ENCODE measurements at regions of chr15 and their contacts with region 1.

Region 1: DNA sequence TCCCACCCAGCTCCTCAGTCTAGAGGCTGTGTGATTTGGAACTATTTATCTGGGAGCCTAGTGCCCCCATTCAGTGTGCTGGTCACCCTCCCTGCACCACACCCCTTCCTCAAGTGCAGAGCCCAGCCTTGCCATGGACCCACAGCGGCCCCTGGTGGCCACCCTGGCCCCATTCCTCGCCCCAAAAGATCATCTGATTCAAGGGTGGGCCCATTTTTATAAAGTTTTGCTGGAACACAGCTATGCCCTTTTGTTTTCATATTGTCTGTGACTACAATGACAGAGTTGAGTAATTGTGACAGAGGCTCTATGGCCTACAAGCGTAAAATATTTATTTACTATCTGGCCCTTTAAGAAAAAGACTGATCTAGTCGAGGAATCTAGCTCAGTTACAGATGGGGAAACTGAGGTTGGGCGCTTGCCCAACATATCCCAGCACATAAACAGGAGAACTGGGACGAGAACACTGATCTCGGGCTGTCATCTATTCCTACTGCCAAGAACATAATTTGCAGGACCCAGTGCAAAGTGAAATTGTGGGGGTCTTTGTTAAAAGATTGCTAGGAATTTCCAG is 1.8 kb downstream of the FES start:
- DNase-seq: peak in 1 of 2 experiments; percentile 61
- ATAC-seq: peak; percentile 57 to 82; a peak in 5 of 6 replicates
- H3K4me3 ChIP-seq: no peak overlapping the region
- H3K27ac ChIP-seq: peak overlapping the region in 1 of 2 experiments; percentile 19; a peak in 1 of 6 replicates
- H3K4me1 ChIP-seq: no peaks in the 10 kb centered on the region
- CTCF ChIP-seq: peak; percentile 99
- EP300 ChIP-seq: no peak
- POLR2A ChIP-seq: no peak
- RAD21 ChIP-seq: peak; percentile 100

Region 2: GRCh38 chr15:90497912-90498311 is 388.2 kb before region 1 on chr15:
- CTCF ChIA-PET with region 1: interaction called, 17 read pairs
- POLR2A ChIA-PET with region 1: no interaction called
- DNase-seq: no peak
- ATAC-seq: no peak; a peak in 1 of 6 replicates
- H3K4me3 ChIP-seq: no peak overlapping the region
- H3K27ac ChIP-seq: no peak overlapping the region
- H3K4me1 ChIP-seq: no peaks in the 10 kb centered on the region
- CTCF ChIP-seq: no peak
- EP300 ChIP-seq: no peak
- POLR2A ChIP-seq: no peak
- RAD21 ChIP-seq: no peak

Region 3: DNA sequence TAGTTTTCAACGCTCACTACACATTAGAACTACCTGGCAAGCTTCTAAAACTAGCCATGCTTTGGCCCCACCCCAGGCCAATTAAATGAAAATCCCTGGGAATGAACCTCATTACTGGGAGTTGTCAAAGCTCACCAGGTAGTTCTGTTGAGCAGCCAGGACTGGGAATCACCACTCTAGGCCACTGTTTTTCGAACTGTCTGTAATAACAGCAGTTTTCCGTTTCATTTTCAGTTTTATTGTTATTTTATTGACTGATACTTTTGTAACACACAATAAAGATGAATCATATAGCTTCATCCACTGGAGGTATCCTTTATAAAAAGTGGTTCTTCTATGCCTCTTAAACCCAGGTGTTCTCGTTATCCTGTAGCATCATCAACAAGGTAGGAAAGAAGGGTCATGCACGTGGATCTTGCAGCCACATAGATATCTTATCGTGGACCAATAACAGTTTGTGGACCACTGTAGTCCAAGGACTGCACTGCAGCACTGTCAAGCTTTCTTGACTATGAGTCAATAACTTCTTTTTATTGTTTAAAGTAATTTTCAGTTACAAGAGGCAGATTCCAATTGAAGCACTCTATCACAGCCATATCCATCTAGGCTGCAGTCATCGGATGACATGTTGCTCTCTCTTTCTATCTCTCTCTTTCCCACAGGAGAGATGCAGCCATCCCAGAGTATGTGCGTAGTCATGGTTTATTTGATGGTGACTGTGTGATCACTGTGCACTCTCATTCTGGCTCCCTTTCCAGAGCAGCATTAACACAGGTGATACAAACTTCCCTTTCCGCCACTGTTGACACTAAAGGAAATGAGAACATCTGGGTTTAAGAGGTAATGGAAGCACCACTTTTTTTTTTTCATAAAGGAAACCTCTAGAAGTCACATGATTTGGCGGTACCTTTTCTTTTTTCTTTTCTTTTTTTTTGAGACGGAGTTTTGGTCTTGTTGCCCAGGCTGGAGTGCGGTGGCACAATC is 208.0 kb before region 1 on chr15:
- CTCF ChIA-PET with region 1: interaction called, 10 read pairs
- POLR2A ChIA-PET with region 1: no interaction called
- DNase-seq: no peak
- ATAC-seq: no peak
- H3K4me3 ChIP-seq: no peak overlapping the region
- H3K27ac ChIP-seq: no peak overlapping the region
- H3K4me1 ChIP-seq: peaks cover 9% of the 10 kb centered on the region; the same call in 2 of the 3 replicates
- CTCF ChIP-seq: no peak
- EP300 ChIP-seq: no peak
- POLR2A ChIP-seq: no peak
- RAD21 ChIP-seq: no peak

Region 4: GRCh38 chr15:90751300-90751825 is 134.8 kb before region 1 on chr15:
- CTCF ChIA-PET with region 1: interaction called, 13 read pairs
- POLR2A ChIA-PET with region 1: no interaction called
- DNase-seq: no peak
- ATAC-seq: no peak
- H3K4me3 ChIP-seq: no peak overlapping the region
- H3K27ac ChIP-seq: no peak overlapping the region
- H3K4me1 ChIP-seq: no peaks in the 10 kb centered on the region
- CTCF ChIP-seq: no peak
- EP300 ChIP-seq: no peak
- POLR2A ChIP-seq: no peak
- RAD21 ChIP-seq: no peak

Region 5: DNA sequence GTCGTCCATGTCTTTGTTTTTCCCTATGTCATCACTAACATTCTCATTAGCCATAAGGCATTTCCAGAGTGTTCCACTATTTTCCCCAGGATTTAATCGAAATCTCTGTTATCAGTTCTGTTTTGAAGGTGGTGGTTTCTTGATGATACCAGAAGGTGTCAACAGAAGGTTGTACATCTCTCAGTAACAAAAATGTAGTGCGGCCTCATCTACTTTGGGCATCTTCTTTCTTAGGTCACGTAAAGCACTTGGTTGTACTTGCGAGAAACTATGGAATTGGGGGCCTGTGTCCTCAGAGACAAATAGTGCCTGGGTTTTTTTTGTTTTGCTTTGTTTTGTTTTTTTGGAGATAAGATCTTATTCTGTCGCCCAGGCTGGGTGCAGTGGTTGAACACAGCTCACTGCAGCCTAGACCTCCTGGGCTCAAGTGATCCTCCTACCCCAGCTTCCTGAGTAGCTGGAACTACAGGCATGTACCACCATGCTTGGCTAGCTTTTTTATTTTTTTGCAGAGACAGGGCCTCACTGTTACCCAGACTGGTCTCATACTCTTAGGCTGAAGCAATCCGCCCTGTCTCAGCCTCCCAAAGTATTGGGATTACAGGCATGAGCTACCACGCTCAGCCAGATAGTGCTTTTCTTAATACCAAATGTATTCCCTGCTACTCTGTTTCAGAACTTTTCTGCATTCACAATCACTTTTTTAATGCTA is 78.9 kb before region 1 on chr15:
- CTCF ChIA-PET with region 1: interaction called, 16 read pairs
- POLR2A ChIA-PET with region 1: no interaction called
- DNase-seq: no peak
- ATAC-seq: no peak
- H3K4me3 ChIP-seq: no peak overlapping the region
- H3K27ac ChIP-seq: no peak overlapping the region
- H3K4me1 ChIP-seq: no peaks in the 10 kb centered on the region
- CTCF ChIP-seq: no peak
- EP300 ChIP-seq: no peak
- POLR2A ChIP-seq: no peak
- RAD21 ChIP-seq: no peak

Region 6: GRCh38 chr15:90860942-90861675 is 25.0 kb before region 1 on chr15:
- CTCF ChIA-PET with region 1: interaction called, 59 read pairs
- POLR2A ChIA-PET with region 1: no interaction called
- DNase-seq: peak; percentile 92 to 95
- ATAC-seq: peak; percentile 76 to 86
- H3K4me3 ChIP-seq: no peak overlapping the region
- H3K27ac ChIP-seq: peak overlapping the region; percentile 59 to 80
- H3K4me1 ChIP-seq: peaks cover 56% of the 10 kb centered on the region
- CTCF ChIP-seq: no peak
- EP300 ChIP-seq: peak; percentile 88 to 89; a peak in 3 of 5 replicates
- POLR2A ChIP-seq: no peak
- RAD21 ChIP-seq: peak in 1 of 2 experiments; percentile 28; a peak in 4 of 5 replicates

Region 7: DNA sequence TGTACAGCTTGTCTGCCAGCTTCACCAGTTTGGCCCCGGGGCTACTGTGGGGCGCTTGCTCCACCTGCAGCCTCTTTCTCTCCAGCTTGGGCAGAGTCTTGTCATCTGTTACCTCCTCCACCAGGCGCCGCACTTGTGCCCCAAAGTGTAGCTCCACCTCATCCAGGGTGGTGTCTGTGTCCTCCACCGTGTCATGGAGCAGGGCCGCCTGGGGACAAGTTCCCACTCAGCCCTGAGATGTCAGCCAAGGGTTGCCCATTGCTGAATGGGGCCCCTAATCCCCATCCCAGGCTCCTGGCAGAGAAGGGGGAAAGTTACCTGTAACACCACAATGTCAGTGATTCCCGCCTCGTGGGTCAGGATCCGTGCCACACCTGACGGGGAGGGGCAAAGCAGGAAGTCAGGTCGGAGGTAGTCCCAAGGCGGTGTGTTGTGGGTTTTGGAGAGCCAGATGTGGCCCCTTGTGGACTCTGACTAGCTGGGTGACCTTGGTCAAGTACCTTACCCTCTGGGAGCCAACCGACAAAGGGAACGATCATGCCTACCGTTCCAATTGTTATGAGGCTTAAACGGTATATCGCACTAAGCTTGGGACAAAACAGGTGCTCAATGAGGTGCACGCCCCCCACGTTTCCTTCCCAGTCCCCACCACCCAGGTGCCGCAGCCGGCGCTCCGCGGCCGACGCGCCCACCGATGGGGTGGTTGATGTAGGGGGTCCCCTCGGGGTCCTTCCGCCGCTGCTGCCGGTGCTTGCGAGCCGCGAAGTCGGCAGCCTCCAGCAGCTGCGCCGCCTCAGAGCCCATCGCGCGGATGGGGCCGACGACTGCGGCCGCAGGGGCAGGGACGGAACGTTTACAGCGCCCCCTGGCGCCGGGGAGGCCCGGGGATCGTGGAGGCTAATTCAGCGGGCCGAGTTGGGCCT is 45.9 kb after region 1 on chr15 and contains the start of gene HDDC3:
- CTCF ChIA-PET with region 1: interaction called, 69 read pairs
- POLR2A ChIA-PET with region 1: no interaction called
- DNase-seq: peak; percentile 94 to 98
- ATAC-seq: peak; percentile 67 to 77
- H3K4me3 ChIP-seq: peak within 1 kb of the TSS; percentile 69
- H3K27ac ChIP-seq: peak within 1 kb of the TSS; percentile 84 to 93
- H3K4me1 ChIP-seq: peaks cover 35% of the 10 kb centered on the region
- CTCF ChIP-seq: peak; percentile 95
- EP300 ChIP-seq: no peak
- POLR2A ChIP-seq: peak; percentile 73
- RAD21 ChIP-seq: peak; percentile 26 to 39
- polyA plus RNA-seq, gene HDDC3: 29.8 and 31.9 TPM in 2 replicates

Region 8: DNA sequence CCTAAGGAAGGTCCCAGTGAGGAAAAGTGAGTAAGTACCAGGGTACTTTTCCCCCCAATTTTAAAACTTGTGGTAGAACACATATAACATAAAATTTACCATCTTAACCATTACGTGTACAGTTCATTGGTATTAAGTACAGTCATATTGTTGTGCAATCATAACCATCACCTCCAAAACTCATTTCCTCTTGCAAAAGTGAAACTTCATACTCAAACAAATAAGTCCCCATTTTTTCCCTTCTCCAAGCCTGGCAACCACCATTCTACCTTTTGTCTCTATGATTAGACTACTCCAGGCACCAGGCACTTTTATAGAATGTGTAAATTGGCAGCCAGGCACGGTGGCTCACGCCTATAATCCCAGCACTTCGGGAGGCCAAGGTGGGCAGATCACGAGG is 96.0 kb after region 1 on chr15:
- CTCF ChIA-PET with region 1: no interaction called
- POLR2A ChIA-PET with region 1: no interaction called
- DNase-seq: no peak
- ATAC-seq: no peak
- H3K4me3 ChIP-seq: no peak overlapping the region
- H3K27ac ChIP-seq: no peak overlapping the region
- H3K4me1 ChIP-seq: peaks cover 12% of the 10 kb centered on the region
- CTCF ChIP-seq: no peak
- EP300 ChIP-seq: no peak
- POLR2A ChIP-seq: no peak
- RAD21 ChIP-seq: no peak